A673 (cell line): ENCODE measurements at regions of chr6 and their contacts with region 1.

Region 1: GRCh38 chr6:15621203-15622044 is 41.4 kb downstream of the DTNBP1 start:
- DNase-seq: peak; percentile 37
- H3K4me3 ChIP-seq: no peak overlapping the region
- H3K27ac ChIP-seq: peak overlapping the region; percentile 83
- H3K4me1 ChIP-seq: peaks cover 80% of the 10 kb centered on the region
- H3K27me3 ChIP-seq: no peaks in the 10 kb centered on the region
- CTCF ChIP-seq: no peak

Region 2: DNA sequence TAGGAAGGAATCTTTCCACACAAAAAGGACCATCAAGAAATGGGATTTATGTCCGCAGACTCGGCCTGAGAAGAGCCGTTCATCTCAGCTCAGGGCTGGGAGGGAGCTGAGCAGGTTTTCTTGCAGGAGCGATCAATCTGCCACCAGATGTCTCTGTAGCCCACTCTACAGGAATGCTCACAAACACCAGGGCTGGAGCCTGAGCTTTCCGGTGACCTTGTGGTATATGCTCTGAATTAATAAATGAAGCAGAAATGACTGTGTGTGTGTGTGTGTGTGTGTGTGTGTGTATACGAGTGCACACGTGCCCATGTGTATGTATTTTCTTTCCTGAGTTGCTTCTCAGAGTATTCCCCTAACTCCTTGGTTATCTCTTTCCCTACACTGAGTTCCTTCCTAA is 1491.8 kb before region 1 on chr6:
- CTCF ChIA-PET with region 1: no interaction called
- POLR2A ChIA-PET with region 1: no interaction called
- intact Hi-C with region 1: loop called (anchors 10 kb)
- DNase-seq: peak; percentile 87
- H3K4me3 ChIP-seq: no peak overlapping the region
- H3K27ac ChIP-seq: peak overlapping the region; percentile 71
- H3K4me1 ChIP-seq: peaks cover 50% of the 10 kb centered on the region
- H3K27me3 ChIP-seq: no peaks in the 10 kb centered on the region
- CTCF ChIP-seq: peak; percentile 84

Region 3: GRCh38 chr6:14210663-14211561 is 1410.5 kb before region 1 on chr6:
- CTCF ChIA-PET with region 1: no interaction called
- POLR2A ChIA-PET with region 1: no interaction called
- intact Hi-C with region 1: loop called (anchors 10 kb)
- DNase-seq: peak; percentile 96
- H3K4me3 ChIP-seq: peak overlapping the region; percentile 54
- H3K27ac ChIP-seq: peak overlapping the region; percentile 91
- H3K4me1 ChIP-seq: peaks cover 38% of the 10 kb centered on the region
- H3K27me3 ChIP-seq: no peaks in the 10 kb centered on the region
- CTCF ChIP-seq: peak; percentile 47; the same call in 1 of the 2 replicates

Region 4: GRCh38 chr6:14665827-14666724 is 955.3 kb before region 1 on chr6:
- CTCF ChIA-PET with region 1: no interaction called
- POLR2A ChIA-PET with region 1: no interaction called
- intact Hi-C with region 1: no loop called
- DNase-seq: no peak
- H3K4me3 ChIP-seq: no peak overlapping the region
- H3K27ac ChIP-seq: no peak overlapping the region
- H3K4me1 ChIP-seq: peaks cover 2% of the 10 kb centered on the region
- H3K27me3 ChIP-seq: no peaks in the 10 kb centered on the region
- CTCF ChIP-seq: no peak

Region 5: DNA sequence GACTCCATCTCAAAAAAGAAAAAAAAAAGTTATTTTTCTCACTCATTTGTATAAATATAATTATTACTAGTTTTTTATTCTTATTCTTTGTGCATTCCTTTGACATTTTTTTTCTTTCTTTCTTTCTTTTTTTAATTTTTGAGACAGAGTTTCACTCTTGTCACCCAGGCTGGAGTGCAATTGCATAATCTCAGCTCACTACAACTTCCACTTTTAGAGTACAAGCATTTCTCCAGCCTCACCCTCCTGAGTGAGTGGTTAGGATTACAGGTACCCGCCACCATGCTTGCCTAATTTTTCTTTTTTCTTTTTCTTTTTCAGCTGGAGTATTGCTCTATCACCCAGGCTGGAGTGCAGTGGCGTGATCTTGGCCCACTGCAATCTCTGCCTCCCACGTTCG is 427.0 kb before region 1 on chr6:
- CTCF ChIA-PET with region 1: no interaction called
- POLR2A ChIA-PET with region 1: no interaction called
- intact Hi-C with region 1: loop called (anchors 5 kb)
- DNase-seq: no peak
- H3K4me3 ChIP-seq: no peak overlapping the region
- H3K27ac ChIP-seq: no peak overlapping the region
- H3K4me1 ChIP-seq: no peaks in the 10 kb centered on the region
- H3K27me3 ChIP-seq: no peaks in the 10 kb centered on the region
- CTCF ChIP-seq: no peak

Region 6: DNA sequence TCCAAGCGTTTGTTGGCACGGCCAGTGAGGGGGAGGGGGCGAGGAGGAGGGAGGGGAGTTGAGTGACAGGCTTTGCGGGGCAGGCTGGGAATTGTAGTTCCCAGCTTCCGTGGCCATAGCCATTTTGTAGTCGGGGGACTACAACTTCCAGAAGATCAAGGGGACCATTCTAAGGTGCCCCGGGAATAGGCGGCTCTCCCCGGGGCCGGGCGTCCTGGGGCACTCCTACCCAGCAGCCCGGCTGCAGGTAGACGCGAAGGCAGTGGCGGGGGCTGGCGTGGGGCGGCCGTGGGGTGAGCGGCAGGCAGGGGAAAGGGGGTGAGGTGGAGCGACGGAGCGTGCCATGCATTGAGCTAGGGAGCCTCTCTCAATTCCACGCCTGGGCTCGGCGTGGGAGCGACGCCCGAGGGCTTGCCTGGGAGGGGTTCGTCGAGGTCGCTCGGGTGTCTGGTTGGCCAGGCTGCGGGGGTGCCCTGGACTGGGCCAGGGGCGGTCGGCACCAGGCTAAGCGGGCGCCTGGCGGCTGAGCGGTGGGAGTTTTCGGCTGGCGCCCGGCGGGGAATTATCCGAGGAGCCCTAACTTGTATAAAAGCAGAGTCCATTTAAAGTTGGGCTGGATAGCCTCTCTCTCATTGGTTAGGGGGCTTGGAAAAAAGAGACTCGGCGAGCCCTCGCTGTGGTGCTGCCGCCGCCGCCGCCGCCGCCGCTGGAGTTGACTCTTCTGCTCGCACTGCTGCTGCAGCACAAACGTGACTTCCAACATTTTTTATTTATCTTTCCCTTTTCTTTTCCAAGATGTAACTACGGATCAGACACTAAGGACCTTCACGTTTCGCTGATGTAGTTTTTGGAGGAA is 375.8 kb before region 1 on chr6 and contains the start of gene JARID2:
- CTCF ChIA-PET with region 1: no interaction called
- POLR2A ChIA-PET with region 1: interaction called, 6 read pairs
- intact Hi-C with region 1: loop called (anchors 5 kb)
- DNase-seq: peak; percentile 99
- H3K4me3 ChIP-seq: peak within 1 kb of the TSS; percentile 71
- H3K27ac ChIP-seq: peak within 1 kb of the TSS; percentile 96
- H3K4me1 ChIP-seq: peaks cover 18% of the 10 kb centered on the region
- H3K27me3 ChIP-seq: no peaks in the 10 kb centered on the region
- CTCF ChIP-seq: no peak
- total RNA-seq, gene JARID2: 29.4 and 34.1 TPM in 2 replicates

Region 7: DNA sequence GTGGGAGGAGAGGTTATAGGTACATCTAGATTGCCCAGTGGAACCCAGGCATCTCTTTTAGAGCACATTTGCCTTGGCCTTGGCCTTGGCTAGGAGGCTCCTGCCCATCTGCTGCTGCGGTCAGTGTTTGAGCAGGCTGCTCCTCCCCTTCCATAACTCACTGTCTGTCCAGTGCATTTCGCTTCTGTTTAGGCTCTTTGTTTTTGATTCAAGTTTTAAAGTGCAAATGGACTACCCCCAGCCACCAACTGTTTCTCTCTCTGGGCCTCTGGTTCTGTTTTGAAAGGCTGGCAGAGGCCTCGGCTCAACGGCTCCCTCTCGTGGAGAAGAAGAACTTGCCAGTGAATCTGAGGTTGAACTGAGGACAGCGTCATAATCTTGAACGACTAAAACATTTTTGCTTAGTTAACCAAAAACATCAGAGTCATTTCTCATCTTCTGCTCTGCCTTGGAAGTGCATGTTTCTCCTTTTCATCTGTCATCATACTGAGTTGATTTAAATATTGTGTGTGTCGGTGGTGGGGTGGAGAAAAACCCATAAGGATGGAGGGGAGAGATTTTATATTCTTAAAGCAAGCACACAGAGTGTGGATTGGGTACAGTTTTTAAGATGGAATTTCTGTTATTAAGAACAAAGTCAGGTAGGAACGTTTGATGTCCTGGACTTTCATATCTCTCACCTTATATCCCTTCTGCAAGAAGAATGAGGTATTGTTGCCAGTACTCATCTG is 130.0 kb before region 1 on chr6:
- CTCF ChIA-PET with region 1: interaction called, 3 read pairs
- POLR2A ChIA-PET with region 1: no interaction called
- intact Hi-C with region 1: loop called (anchors 5 kb)
- DNase-seq: peak; percentile 82
- H3K4me3 ChIP-seq: no peak overlapping the region
- H3K27ac ChIP-seq: no peak overlapping the region
- H3K4me1 ChIP-seq: peaks cover 39% of the 10 kb centered on the region
- H3K27me3 ChIP-seq: no peaks in the 10 kb centered on the region
- CTCF ChIP-seq: peak; percentile 96

Region 8: GRCh38 chr6:15522427-15522826 is 99.0 kb before region 1 on chr6:
- CTCF ChIA-PET with region 1: no interaction called
- POLR2A ChIA-PET with region 1: no interaction called
- intact Hi-C with region 1: loop called (anchors 5 kb)
- DNase-seq: no peak
- H3K4me3 ChIP-seq: no peak overlapping the region
- H3K27ac ChIP-seq: no peak overlapping the region
- H3K4me1 ChIP-seq: peaks cover 14% of the 10 kb centered on the region
- H3K27me3 ChIP-seq: no peaks in the 10 kb centered on the region
- CTCF ChIP-seq: no peak

Region 9: DNA sequence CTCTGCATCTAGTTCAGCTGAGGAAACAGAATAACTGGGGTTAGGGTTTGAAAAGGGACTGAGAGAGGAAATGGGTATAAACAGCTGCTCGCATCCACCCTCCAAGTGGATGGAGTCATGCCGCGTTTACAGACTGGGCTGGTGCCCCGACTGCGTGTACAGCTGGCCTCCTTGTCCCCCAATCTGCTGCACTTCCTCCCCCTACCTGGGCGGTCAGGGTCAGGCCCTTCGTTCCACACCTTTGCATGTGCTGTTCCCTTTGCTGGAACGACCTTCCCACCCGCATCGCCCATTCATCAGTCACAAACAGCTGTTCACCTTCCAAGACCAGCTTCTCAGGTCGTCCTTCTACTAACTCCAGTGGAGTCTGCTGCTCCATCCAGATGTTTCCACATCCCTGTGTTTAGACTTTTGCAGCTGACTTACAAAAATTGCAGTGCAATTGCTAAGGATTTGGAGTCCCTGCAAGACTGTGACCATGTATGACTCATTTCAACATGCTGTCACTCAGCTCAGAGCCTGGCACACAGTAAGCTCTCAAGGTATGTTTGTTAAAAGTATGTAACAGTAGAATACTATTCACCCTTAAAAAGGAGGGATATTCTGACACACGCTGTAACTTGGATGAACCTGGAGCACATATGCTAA is 87.9 kb before region 1 on chr6:
- CTCF ChIA-PET with region 1: no interaction called
- POLR2A ChIA-PET with region 1: no interaction called
- intact Hi-C with region 1: no loop called
- DNase-seq: no peak
- H3K4me3 ChIP-seq: no peak overlapping the region
- H3K27ac ChIP-seq: no peak overlapping the region
- H3K4me1 ChIP-seq: peaks cover 27% of the 10 kb centered on the region
- H3K27me3 ChIP-seq: no peaks in the 10 kb centered on the region
- CTCF ChIP-seq: no peak